ENCODE measurements at regions of chr4 and their contacts with region 1.

Region 1: DNA sequence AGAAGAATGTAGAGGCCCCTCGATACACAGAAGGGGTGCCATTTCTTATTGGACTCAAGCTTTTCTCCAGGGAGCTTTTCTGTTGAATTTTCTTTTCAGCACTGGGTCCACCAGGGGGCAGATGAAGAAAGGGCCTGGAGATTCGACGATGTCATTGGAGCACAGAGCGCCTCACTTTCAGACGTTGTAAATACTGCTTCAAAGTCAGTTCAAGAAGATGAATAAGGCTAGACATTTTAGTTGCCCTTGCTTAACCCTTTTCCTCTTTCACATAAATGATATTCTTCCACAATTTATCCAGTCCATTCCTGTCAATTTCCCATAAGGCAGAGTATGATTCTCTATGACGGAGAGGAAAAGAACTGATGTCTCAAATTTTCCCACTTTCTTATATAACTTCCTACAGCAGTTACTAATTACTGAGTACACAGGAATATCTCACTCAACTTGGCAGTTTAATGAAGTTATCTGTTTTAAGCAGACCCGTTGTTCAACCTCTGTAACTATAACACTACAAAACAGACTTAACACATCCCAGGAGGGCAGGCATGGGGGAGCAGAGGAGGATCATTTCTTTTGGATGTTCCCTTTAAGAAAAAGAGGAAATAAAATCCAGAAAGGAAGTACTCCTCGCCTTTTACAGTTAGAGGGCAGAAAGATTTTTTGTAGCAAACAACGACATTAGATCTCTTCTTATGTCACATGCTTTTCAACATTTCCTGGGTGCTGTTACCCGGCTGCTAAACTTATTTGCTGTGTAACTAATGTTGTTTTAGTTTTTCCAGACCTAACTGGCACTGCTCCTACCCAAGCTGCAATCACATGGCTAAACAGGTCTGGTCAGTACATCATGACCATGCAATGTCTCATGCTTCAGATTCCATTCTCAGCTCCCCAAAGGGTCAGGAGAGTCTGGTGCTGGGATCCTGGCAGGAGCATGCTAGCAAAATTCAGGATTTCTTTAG is 12.2 kb upstream of the CENPU start:
- DNase-seq: peak; percentile 89
- H3K4me3 ChIP-seq: peak overlapping the region; percentile 56
- H3K27ac ChIP-seq: peak overlapping the region; percentile 59
- H3K4me1 ChIP-seq: peaks cover 13% of the 10 kb centered on the region
- H3K27me3 ChIP-seq: no peaks in the 10 kb centered on the region

Region 2: GRCh38 chr4:185005216-185005819 is 259.2 kb after region 1 on chr4:
- in situ Hi-C with region 1: loop called (anchors 10 kb)
- DNase-seq: peak; percentile 85
- H3K4me3 ChIP-seq: peak overlapping the region; percentile 42
- H3K27ac ChIP-seq: no peak overlapping the region
- H3K4me1 ChIP-seq: no peaks in the 10 kb centered on the region
- H3K27me3 ChIP-seq: peaks cover 6% of the 10 kb centered on the region